Mammary epithelial cell (primary cell): ENCODE measurements at regions of chr4 and their contacts with region 1.

Region 1: GRCh38 chr4:61427818-61428495 is 227.8 kb downstream of the ADGRL3 start:
- DNase-seq: peak; percentile 76
- H3K4me3 ChIP-seq: no peak overlapping the region
- H3K27ac ChIP-seq: peak overlapping the region; percentile 52
- H3K4me1 ChIP-seq: peaks cover 34% of the 10 kb centered on the region
- H3K27me3 ChIP-seq: no peaks in the 10 kb centered on the region
- CTCF ChIP-seq: no peak

Region 2: DNA sequence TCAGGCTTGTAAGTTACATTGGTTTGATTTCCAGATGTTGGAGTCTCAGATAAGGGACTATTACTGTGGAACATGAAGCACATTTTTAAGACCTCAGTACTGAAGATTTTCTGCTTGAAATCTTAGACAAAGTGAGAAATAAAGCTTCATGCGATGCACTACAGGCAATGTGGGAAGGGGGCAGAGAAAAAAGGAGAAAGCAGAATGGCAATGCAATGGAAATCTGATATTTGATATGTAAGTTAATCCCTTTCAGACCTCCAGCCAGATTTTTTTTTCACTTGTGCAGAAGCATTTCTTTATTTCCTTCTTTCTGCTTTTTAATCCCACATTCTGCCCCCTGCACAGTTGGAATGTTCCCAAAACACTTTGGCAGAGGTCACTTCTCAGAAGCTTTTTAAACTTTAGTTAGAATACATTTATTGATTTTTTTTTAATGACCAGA is 53.5 kb before region 1 on chr4:
- CTCF ChIA-PET with region 1: no interaction called
- dilution Hi-C with region 1: no loop called
- in situ Hi-C with region 1: no loop called
- intact Hi-C with region 1: loop called (anchors 1 kb)
- DNase-seq: no peak
- H3K4me3 ChIP-seq: no peak overlapping the region
- H3K27ac ChIP-seq: peak overlapping the region; percentile 31
- H3K4me1 ChIP-seq: peaks cover 18% of the 10 kb centered on the region
- H3K27me3 ChIP-seq: no peaks in the 10 kb centered on the region
- CTCF ChIP-seq: no peak

Region 3: DNA sequence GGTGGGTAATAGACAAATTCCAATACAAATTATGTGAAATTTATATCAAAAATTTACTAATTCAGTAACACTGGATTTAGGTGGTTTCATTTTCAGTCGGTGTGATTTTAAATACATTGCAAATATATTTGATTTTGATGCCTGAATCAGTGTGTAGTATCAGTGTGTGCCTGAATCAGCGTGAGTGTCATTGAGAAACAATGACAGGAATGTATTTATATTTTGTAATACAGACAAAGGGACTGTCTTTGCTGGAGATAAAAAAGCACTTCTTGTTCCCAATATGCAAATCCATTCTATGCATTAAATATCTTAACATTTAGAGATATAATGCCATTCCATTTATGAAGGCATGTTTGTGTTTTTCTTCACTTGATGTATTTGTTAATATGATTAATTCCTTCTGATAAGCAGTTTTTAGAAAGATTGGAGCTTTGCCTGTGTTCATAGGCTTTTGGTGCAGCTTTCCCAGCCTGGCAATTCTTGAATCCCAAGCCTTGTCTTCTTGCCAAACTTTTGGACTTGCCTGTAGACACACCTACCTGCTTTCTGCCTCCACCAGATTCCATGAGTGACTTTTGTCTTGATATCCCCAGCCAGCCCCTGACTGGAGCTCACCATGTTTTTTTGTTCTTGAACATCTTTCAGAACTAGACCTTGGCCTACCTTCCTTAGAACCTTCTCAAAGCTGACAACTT is 16.0 kb after region 1 on chr4:
- CTCF ChIA-PET with region 1: no interaction called
- dilution Hi-C with region 1: no loop called
- in situ Hi-C with region 1: no loop called
- intact Hi-C with region 1: loop called (anchors 1 kb)
- DNase-seq: peak; percentile 64
- H3K4me3 ChIP-seq: peak overlapping the region in 2 of 3 experiments; percentile 2 to 9
- H3K27ac ChIP-seq: peak overlapping the region; percentile 59
- H3K4me1 ChIP-seq: peaks cover 14% of the 10 kb centered on the region
- H3K27me3 ChIP-seq: no peaks in the 10 kb centered on the region
- CTCF ChIP-seq: no peak

Region 4: GRCh38 chr4:61462451-61463326 is 34.7 kb after region 1 on chr4:
- CTCF ChIA-PET with region 1: no interaction called
- dilution Hi-C with region 1: no loop called
- in situ Hi-C with region 1: no loop called
- intact Hi-C with region 1: loop called (anchors 2 kb)
- DNase-seq: peak; percentile 89
- H3K4me3 ChIP-seq: peak overlapping the region in 2 of 3 experiments; percentile 1 to 33
- H3K27ac ChIP-seq: peak overlapping the region; percentile 89
- H3K4me1 ChIP-seq: peaks cover 26% of the 10 kb centered on the region
- H3K27me3 ChIP-seq: no peaks in the 10 kb centered on the region
- CTCF ChIP-seq: no peak

Region 5: GRCh38 chr4:61468091-61468720 is 40.2 kb after region 1 on chr4:
- CTCF ChIA-PET with region 1: no interaction called
- dilution Hi-C with region 1: no loop called
- in situ Hi-C with region 1: no loop called
- intact Hi-C with region 1: loop called (anchors 1 kb)
- DNase-seq: peak; percentile 94
- H3K4me3 ChIP-seq: no peak overlapping the region
- H3K27ac ChIP-seq: peak overlapping the region; percentile 63
- H3K4me1 ChIP-seq: peaks cover 32% of the 10 kb centered on the region
- H3K27me3 ChIP-seq: no peaks in the 10 kb centered on the region
- CTCF ChIP-seq: no peak

Region 6: DNA sequence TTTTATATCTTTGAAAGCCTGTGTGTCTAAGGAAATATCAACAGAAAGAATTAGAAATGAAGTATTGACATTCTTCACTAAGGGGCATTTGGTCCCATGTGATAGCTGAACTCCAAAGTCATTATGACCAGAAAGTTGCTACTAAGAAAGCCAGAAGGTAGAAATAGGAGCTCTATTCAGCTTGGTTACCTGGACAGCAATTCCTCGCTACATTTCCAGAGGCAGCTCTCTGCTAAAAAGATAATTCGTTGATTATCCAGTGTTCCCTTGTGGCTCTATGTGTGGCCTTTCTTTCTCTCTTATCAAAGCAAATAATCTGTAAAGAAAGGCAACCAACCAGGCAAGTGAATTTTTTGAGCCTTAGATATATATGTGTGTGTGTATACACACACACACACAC is 113.5 kb after region 1 on chr4:
- CTCF ChIA-PET with region 1: no interaction called
- dilution Hi-C with region 1: no loop called
- in situ Hi-C with region 1: no loop called
- intact Hi-C with region 1: no loop called
- DNase-seq: no peak
- H3K4me3 ChIP-seq: no peak overlapping the region
- H3K27ac ChIP-seq: no peak overlapping the region
- H3K4me1 ChIP-seq: no peaks in the 10 kb centered on the region
- H3K27me3 ChIP-seq: no peaks in the 10 kb centered on the region
- CTCF ChIP-seq: peak; percentile 15 to 50